ENCODE measurements at regions of chr18 and their contacts with region 1.

Region 1: DNA sequence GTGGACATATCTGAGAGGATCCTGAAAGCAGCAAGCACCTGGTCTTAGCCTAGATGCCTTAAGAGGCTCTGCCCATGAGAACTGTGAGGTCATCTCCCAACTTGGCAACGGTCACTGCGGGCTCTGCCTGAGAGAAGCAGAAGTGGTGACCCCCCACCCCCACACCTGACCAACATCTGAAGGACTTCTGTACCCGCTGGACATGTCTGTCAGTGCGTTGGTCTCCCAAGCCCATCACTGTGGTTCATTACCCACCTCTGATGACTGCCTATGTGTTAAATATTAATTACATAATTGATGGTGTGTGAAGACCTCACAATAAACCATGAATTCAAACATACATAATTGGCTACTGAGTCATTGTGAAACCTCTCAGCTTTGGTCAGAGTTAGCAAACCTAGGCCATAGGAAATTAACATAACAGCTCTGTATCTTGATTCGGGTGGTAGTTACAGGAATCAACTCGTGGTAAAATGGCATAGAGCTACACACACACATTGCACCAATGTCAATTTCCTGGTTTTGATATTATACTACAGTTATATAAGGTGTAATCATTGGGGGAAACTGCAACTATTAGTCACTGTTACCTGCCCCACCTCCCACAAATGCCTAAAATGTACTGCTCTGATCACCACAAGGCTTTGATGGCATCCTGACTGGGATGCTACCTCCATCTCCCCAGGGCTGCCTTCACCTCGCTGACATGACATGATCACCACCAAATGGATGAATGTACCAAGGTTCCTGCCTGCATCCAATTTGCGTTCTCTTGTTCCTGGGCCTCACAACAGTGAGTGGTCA is 4.3 kb upstream of the GALNT1 start:
- DNase-seq: no peak
- H3K4me3 ChIP-seq: no peak overlapping the region
- H3K27ac ChIP-seq: no peak overlapping the region
- H3K4me1 ChIP-seq: no peaks in the 10 kb centered on the region
- H3K27me3 ChIP-seq: no peaks in the 10 kb centered on the region
- CTCF ChIP-seq: no peak
- POLR2A ChIP-seq: no peak

Region 2: GRCh38 chr18:35334821-35335220 is 242.4 kb before region 1 on chr18:
- intact Hi-C with region 1: no loop called
- DNase-seq: no peak
- H3K4me3 ChIP-seq: no peak overlapping the region
- H3K27ac ChIP-seq: no peak overlapping the region
- H3K4me1 ChIP-seq: no peaks in the 10 kb centered on the region
- H3K27me3 ChIP-seq: no peaks in the 10 kb centered on the region
- CTCF ChIP-seq: no peak
- POLR2A ChIP-seq: no peak

Region 3: DNA sequence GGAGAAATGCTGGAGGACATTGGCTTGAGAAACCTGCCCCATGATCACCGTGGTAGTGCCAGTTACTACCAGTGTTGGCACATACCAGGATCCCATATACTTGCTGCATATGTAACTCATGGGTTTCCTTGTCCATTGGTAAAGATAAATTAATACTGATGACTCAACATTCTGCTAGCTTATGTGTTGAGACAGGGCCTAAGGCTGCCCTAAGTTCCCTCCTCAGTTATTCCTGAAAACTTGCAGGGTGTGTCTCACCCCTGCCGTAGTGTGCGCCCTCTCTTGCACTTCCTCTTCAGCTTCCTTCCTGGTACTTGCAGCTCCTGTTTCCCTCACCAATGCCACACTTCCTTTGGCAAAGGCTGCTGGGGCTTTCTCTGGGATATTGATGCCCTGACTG is 75.2 kb before region 1 on chr18:
- intact Hi-C with region 1: loop called (anchors 10 kb)
- DNase-seq: no peak
- H3K4me3 ChIP-seq: no peak overlapping the region
- H3K27ac ChIP-seq: no peak overlapping the region
- H3K4me1 ChIP-seq: no peaks in the 10 kb centered on the region
- H3K27me3 ChIP-seq: no peaks in the 10 kb centered on the region
- CTCF ChIP-seq: no peak
- POLR2A ChIP-seq: no peak